Heart left ventricle (tissue), 16 donors: ENCODE measurements at regions of chr3 and their contacts with region 1.

Region 1: DNA sequence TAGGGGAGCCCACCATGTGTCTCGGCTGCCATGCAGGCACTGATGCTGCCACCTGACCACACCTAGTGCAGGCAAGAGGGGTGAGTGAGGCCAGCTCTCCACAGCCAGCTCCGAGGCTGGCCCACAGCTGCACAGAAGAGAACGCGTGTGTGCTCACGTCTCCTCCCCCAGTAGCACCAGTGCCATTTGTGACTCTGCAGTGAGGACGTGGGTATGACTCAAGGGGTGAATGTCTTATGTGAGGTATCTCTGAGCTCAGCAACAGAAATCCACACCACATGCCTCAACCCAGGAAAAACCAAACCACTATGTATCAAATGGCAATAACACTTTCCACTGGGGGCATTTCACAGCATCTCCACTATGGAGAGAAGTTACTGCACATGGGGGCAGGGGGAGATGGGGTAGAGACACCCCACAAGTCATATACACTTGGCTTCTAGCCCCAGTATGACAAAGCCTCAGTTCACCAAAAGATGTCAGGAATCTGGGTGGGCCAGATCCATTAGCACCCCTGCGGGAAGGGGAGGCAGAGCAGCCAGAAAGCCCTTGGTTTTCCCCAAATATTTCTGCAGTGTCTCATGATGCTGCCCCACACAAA is 87.6 kb downstream of the LRIG1 start:
- DNase-seq: no peak
- ATAC-seq: peak in 1 of 4 donors; percentile 9
- H3K4me3 ChIP-seq: no peak overlapping the region
- H3K27ac ChIP-seq: peak overlapping the region in 9 of 12 donors; percentile 11 to 94 (median 78)
- H3K4me1 ChIP-seq: peaks cover 0 to 96% (median 50%) of the 10 kb centered on the region in 12 donors
- H3K27me3 ChIP-seq: no peaks in the 10 kb centered on the region
- CTCF ChIP-seq: no peak
- POLR2A ChIP-seq: no peak

Region 2: DNA sequence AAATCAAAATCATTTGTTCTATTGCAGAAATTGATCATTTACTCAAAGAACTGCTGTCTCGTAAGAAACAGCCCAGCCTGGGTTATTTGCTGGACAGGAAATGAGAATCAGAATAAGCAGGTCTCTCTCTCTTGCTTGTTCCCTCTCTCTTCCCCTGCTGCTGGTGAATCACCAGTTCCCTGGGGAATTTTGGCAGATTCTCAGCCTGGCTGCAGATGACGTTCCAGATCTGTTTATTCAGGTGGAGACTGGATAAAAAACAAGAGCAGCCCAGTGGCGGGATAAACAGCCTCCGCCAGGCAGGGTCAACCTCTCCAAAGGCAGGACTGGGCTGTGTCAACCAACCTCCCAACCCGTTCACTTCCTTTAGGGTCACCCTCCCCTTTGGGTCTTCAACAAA is 15.5 kb after region 1 on chr3:
- intact Hi-C with region 1: loop called in 1 of 10 experiments (anchors 2 kb)
- DNase-seq: peak; percentile 75 to 87 (median 82)
- ATAC-seq: peak; percentile 57 to 77 (median 70)
- H3K4me3 ChIP-seq: no peak overlapping the region
- H3K27ac ChIP-seq: peak overlapping the region; percentile 34 to 81 (median 66)
- H3K4me1 ChIP-seq: peaks cover 3 to 96% (median 77%) of the 10 kb centered on the region in 12 donors
- H3K27me3 ChIP-seq: no peaks in the 10 kb centered on the region
- CTCF ChIP-seq: no peak
- POLR2A ChIP-seq: no peak